Endothelial cell of umbilical vein (primary cell): ENCODE measurements at regions of chr4 and their contacts with region 1.

Region 1: DNA sequence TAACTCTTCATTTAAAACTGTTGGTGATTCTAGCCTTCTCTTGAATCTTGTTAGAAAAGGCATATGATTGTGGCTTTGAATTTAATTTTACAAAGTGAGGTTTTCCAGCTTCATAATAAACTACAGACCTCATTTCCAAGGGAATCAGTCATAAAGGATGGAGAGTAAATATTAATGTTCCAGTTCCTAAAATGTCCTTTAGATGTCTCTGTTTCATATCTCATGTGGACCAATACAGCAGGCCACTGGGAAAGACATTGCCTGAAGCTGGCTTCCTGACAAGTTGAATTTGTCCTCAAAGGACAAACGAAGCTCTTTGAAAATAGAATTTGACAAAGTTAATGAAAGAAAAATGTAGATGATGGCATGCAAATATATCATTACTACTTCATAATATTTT is 125.4 kb downstream of the ZNF330 start:
- DNase-seq: peak; percentile 73
- H3K4me3 ChIP-seq: no peak overlapping the region
- H3K27ac ChIP-seq: no peak overlapping the region
- H3K4me1 ChIP-seq: peaks cover 25% of the 10 kb centered on the region
- H3K27me3 ChIP-seq: no peaks in the 10 kb centered on the region
- CTCF ChIP-seq: peak; percentile 24 to 31
- POLR2A ChIP-seq: no peak

Region 2: DNA sequence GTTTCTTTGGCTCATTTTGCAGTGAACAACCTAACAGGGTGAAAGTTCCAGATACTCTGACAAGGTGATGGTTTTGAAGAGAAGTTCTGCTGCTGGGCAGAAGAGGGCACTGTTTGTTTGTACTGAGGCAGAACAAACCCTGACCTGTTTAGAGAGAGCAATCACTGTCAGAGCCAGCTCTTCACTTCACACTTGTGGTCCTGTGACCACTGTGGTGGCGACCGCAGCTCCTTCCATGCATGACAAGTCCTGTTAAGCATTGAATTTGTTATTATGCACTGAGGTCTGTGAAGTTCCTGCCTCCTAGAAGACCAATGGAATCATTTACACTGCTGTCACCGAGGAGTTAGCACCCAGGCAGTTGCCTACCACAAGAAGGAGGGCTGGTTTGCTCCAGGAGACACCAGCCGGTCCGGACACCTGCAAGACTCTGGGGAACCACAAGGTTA is 38.9 kb before region 1 on chr4:
- CTCF ChIA-PET with region 1: interaction called, 19 read pairs
- POLR2A ChIA-PET with region 1: no interaction called
- dilution Hi-C with region 1: no loop called
- intact Hi-C with region 1: no loop called
- DNase-seq: peak; percentile 69
- H3K4me3 ChIP-seq: no peak overlapping the region
- H3K27ac ChIP-seq: no peak overlapping the region
- H3K4me1 ChIP-seq: no peaks in the 10 kb centered on the region
- H3K27me3 ChIP-seq: no peaks in the 10 kb centered on the region
- CTCF ChIP-seq: peak; percentile 69 to 81
- POLR2A ChIP-seq: no peak

Region 3: DNA sequence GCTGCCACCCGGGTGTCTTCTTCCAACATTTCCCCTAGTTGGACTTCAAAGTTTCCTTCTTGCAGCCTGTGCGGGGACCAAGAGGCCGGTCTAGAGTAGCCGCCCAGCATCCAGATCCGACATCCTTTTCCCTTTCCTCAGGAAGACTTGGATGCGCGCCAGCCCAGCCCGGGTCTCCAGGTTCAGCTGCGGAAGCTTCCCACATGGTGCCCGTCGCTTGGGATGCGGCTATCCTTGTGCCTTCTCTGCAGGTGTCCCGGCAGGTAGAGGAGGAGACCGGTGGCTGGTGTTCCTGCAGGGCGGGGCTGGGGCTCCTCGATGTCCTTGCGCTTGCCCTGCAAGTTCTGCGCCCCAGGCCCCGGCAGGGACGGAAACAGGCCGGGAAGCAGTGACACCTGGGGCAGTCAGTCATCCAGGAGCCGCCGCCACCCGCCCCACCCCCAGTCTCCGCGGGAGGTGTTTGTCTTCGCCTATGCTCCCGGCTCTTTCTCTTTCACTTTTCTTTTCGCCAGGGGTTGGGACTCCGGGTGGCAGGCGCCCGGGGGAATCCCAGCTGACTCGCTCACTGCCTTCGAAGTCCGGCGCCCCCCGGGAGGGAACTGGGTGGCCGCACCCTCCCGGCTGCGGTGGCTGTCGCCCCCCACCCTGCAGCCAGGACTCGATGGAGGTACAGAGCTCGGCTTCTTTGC is 290.1 kb after region 1 on chr4 and contains the start of gene IL15:
- CTCF ChIA-PET with region 1: interaction called, 12 read pairs
- POLR2A ChIA-PET with region 1: no interaction called
- dilution Hi-C with region 1: no loop called
- intact Hi-C with region 1: loop called (anchors 5 kb)
- DNase-seq: peak; percentile 74
- H3K4me3 ChIP-seq: peak within 1 kb of the TSS; percentile 79 to 90 (median 86)
- H3K27ac ChIP-seq: peak within 1 kb of the TSS; percentile 25
- H3K4me1 ChIP-seq: peaks cover 8% of the 10 kb centered on the region
- H3K27me3 ChIP-seq: no peaks in the 10 kb centered on the region
- CTCF ChIP-seq: no peak
- POLR2A ChIP-seq: no peak
- total RNA-seq, gene IL15: 3.0 and 3.1 TPM in 2 replicates

Region 4: DNA sequence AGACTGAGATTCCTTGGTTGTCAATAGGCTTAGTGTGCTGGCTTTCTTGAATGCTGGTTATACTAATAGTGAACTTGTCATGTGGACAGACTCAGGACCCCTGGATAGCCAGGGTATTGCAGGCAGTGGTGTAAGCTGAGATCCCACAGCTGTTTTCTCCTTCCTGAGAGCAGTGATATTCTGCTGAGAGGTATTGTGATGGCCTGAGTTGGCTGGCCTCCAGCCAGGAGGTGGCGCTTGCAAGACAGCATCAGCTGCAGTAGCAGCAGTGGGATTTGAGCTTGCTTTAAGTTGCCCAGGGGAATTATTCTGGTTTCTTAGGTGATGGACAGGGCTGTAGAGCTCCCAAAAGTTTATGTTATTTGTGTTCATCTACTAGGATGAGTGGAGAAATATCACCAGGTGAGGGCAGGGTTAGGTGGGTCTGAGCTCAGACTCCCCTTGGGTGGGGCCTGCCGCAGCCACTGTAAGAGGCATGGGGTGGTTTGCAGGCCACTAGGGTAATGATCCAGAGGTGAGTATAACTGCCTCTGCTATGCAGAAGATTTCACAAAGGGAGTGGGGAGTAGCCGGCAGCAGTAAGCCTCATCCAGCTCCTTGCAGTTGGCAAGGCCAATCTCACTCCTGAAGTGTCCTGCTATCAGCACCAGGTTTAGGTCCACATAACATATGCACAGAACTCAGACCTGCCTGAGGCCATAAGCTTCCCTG is 356.5 kb after region 1 on chr4:
- CTCF ChIA-PET with region 1: interaction called, 23 read pairs
- POLR2A ChIA-PET with region 1: no interaction called
- dilution Hi-C with region 1: no loop called
- intact Hi-C with region 1: no loop called
- DNase-seq: peak; percentile 20
- H3K4me3 ChIP-seq: no peak overlapping the region
- H3K27ac ChIP-seq: no peak overlapping the region
- H3K4me1 ChIP-seq: no peaks in the 10 kb centered on the region
- H3K27me3 ChIP-seq: no peaks in the 10 kb centered on the region
- CTCF ChIP-seq: no peak
- POLR2A ChIP-seq: no peak

Region 5: DNA sequence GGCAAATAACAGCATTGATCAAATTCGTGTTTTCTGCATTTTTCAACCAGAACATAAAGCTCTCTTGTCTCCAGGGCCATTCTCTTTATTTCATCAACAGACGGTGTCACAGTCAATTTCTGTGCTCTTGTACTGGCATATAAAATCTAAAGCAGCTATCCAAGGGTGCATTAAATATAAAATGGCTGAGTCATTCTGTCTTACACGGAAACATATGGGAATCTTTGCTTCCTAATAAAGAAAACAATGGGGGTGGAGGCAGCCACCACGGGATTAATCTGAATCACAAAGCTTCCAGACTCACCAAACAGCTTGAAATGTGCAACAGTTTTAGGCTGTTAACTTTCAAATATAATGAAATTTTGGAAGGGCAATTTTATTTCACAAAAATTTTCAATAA is 422.8 kb after region 1 on chr4:
- CTCF ChIA-PET with region 1: interaction called, 10 read pairs
- POLR2A ChIA-PET with region 1: no interaction called
- dilution Hi-C with region 1: no loop called
- intact Hi-C with region 1: no loop called
- DNase-seq: peak; percentile 93
- H3K4me3 ChIP-seq: no peak overlapping the region
- H3K27ac ChIP-seq: peak overlapping the region; percentile 87
- H3K4me1 ChIP-seq: peaks cover 13% of the 10 kb centered on the region
- H3K27me3 ChIP-seq: no peaks in the 10 kb centered on the region
- CTCF ChIP-seq: no peak
- POLR2A ChIP-seq: no peak

Region 6: DNA sequence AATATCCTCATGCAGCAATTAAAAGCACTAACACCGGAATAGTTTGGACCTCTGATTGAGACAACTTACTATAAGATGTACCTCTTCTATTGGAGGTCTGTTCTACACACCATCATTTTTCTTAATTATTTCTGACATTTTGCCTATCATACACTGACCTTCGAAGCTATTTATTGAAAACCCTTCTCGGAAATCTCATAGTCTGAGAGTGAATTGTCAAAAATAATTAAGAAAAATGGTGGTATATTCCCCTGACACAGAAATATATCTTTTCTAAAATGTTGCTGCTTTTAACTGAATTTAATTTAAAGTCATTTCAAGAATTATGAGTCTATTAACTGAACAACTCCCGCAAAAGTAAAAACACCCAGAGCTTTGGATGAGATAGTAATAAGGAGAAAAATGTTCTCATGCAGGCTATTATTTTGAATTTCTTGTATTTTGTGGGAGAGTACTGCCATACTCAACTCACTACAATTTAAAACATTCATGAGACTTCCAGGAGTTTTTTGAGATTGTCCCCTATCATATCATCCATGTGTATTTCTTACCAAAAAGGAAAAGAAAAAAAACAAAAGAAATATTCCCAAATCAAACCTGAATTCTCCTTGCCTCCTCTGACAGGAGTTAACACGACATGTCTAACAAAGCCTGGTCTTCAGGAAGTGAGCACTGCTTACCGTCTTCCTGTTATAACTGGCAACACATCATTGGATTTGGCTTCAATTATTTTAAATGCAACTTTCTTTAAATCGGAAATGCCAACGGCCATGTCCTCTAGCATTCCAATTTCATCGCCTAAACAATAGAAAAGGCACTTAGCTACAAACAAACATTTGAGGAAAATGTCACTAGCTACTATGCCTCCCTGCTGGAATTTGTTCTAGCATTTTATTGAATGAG is 775.6 kb after region 1 on chr4:
- CTCF ChIA-PET with region 1: interaction called, 20 read pairs
- POLR2A ChIA-PET with region 1: no interaction called
- dilution Hi-C with region 1: no loop called
- intact Hi-C with region 1: loop called (anchors 1 kb)
- DNase-seq: peak; percentile 92
- H3K4me3 ChIP-seq: peak overlapping the region in 1 of 3 experiments; percentile 23
- H3K27ac ChIP-seq: peak overlapping the region; percentile 100
- H3K4me1 ChIP-seq: peaks cover 30% of the 10 kb centered on the region
- H3K27me3 ChIP-seq: no peaks in the 10 kb centered on the region
- CTCF ChIP-seq: no peak
- POLR2A ChIP-seq: peak; percentile 46

Region 7: GRCh38 chr4:142181021-142181420 is 834.9 kb after region 1 on chr4:
- CTCF ChIA-PET with region 1: no interaction called
- POLR2A ChIA-PET with region 1: no interaction called
- dilution Hi-C with region 1: no loop called
- intact Hi-C with region 1: no loop called
- DNase-seq: no peak
- H3K4me3 ChIP-seq: no peak overlapping the region
- H3K27ac ChIP-seq: no peak overlapping the region
- H3K4me1 ChIP-seq: no peaks in the 10 kb centered on the region
- H3K27me3 ChIP-seq: no peaks in the 10 kb centered on the region
- CTCF ChIP-seq: no peak
- POLR2A ChIP-seq: no peak

Region 8: GRCh38 chr4:142497606-142498005 is 1151.5 kb after region 1 on chr4:
- CTCF ChIA-PET with region 1: no interaction called
- POLR2A ChIA-PET with region 1: no interaction called
- dilution Hi-C with region 1: no loop called
- intact Hi-C with region 1: no loop called
- DNase-seq: no peak
- H3K4me3 ChIP-seq: no peak overlapping the region
- H3K27ac ChIP-seq: no peak overlapping the region
- H3K4me1 ChIP-seq: no peaks in the 10 kb centered on the region
- H3K27me3 ChIP-seq: no peaks in the 10 kb centered on the region
- CTCF ChIP-seq: no peak
- POLR2A ChIP-seq: no peak

Region 9: GRCh38 chr4:142719854-142720541 is 1373.9 kb after region 1 on chr4:
- CTCF ChIA-PET with region 1: interaction called, 16 read pairs
- POLR2A ChIA-PET with region 1: no interaction called
- dilution Hi-C with region 1: no loop called
- intact Hi-C with region 1: loop called (anchors 10 kb)
- DNase-seq: peak; percentile 39
- H3K4me3 ChIP-seq: no peak overlapping the region
- H3K27ac ChIP-seq: no peak overlapping the region
- H3K4me1 ChIP-seq: no peaks in the 10 kb centered on the region
- H3K27me3 ChIP-seq: no peaks in the 10 kb centered on the region
- CTCF ChIP-seq: peak in 1 of 2 donors; percentile 27
- POLR2A ChIP-seq: no peak